ENCODE measurements at regions of chr7 and their contacts with region 1.

Region 1: DNA sequence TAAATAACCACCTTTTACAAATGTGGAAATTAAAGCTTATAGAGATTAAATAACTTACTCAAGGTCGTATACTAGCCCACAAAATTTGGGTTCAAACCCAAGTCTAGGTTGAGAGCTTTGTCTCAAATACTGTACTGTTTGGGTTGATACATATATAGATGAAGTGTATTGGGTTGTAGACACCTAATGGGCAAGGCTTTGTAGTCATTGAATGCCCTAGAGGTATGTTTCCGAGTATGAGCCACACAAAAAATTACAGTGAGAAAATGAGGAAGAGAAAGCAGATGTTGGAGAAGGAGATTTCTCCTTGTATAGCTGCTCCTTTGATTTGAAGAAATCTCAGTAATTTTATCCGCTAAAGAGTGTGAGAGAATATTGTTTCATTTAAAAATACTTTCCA is 60.6 kb downstream of the C1GALT1 start:
- DNase-seq: no peak
- ATAC-seq: no peak
- H3K4me3 ChIP-seq: no peak overlapping the region
- H3K4me3 Mint-ChIP-seq: no peak overlapping the region
- H3K27ac ChIP-seq: no peak overlapping the region
- H3K27ac Mint-ChIP-seq: peak overlapping the region in 2 of 9 donors; percentile 9 to 33
- H3K4me1 ChIP-seq: peaks cover 0 to 6% of the 10 kb centered on the region in 2 donors
- H3K4me1 Mint-ChIP-seq: peaks cover 8 to 79% (median 49%) of the 10 kb centered on the region in 7 donors
- H3K27me3 ChIP-seq: no peaks in the 10 kb centered on the region
- H3K27me3 Mint-ChIP-seq: no peaks in the 10 kb centered on the region

Region 2: GRCh38 chr7:7190142-7190541 is 52.8 kb before region 1 on chr7:
- CTCF ChIA-PET with region 1: no interaction called
- POLR2A ChIA-PET with region 1: no interaction called
- intact Hi-C with region 1: loop called in 1 of 2 experiments (anchors 2 kb)
- DNase-seq: no peak
- ATAC-seq: no peak
- H3K4me3 ChIP-seq: no peak overlapping the region
- H3K4me3 Mint-ChIP-seq: peak overlapping the region in 1 of 10 donors; percentile 7
- H3K27ac ChIP-seq: no peak overlapping the region
- H3K27ac Mint-ChIP-seq: peak overlapping the region in 2 of 9 donors; percentile 8 to 16
- H3K4me1 ChIP-seq: peaks cover 16 to 41% of the 10 kb centered on the region in 2 donors
- H3K4me1 Mint-ChIP-seq: peaks cover 25 to 54% (median 41%) of the 10 kb centered on the region in 7 donors
- H3K27me3 ChIP-seq: no peaks in the 10 kb centered on the region
- H3K27me3 Mint-ChIP-seq: no peaks in the 10 kb centered on the region

Region 3: GRCh38 chr7:7257899-7258692 is 15.2 kb after region 1 on chr7:
- CTCF ChIA-PET with region 1: interaction called, 5 read pairs
- POLR2A ChIA-PET with region 1: interaction called, 3 read pairs
- intact Hi-C with region 1: loop called in 1 of 2 experiments (anchors 2 kb)
- DNase-seq: no peak
- ATAC-seq: peak; percentile 60
- H3K4me3 ChIP-seq: no peak overlapping the region
- H3K4me3 Mint-ChIP-seq: peak overlapping the region; percentile 46 to 78 (median 71)
- H3K27ac ChIP-seq: peak overlapping the region; percentile 62
- H3K27ac Mint-ChIP-seq: peak overlapping the region; percentile 70 to 92 (median 86)
- H3K4me1 ChIP-seq: peaks cover 14 to 19% of the 10 kb centered on the region in 2 donors
- H3K4me1 Mint-ChIP-seq: peaks cover 10 to 64% (median 49%) of the 10 kb centered on the region in 7 donors
- H3K27me3 ChIP-seq: no peaks in the 10 kb centered on the region
- H3K27me3 Mint-ChIP-seq: no peaks in the 10 kb centered on the region

Region 4: GRCh38 chr7:8325063-8325462 is 1082.2 kb after region 1 on chr7:
- CTCF ChIA-PET with region 1: no interaction called
- POLR2A ChIA-PET with region 1: no interaction called
- intact Hi-C with region 1: no loop called
- DNase-seq: no peak
- ATAC-seq: no peak
- H3K4me3 ChIP-seq: no peak overlapping the region
- H3K4me3 Mint-ChIP-seq: no peak overlapping the region
- H3K27ac ChIP-seq: no peak overlapping the region
- H3K27ac Mint-ChIP-seq: no peak overlapping the region
- H3K4me1 ChIP-seq: no peaks in the 10 kb centered on the region
- H3K4me1 Mint-ChIP-seq: no peaks in the 10 kb centered on the region
- H3K27me3 ChIP-seq: no peaks in the 10 kb centered on the region
- H3K27me3 Mint-ChIP-seq: peaks cover 5 to 31% (median 29%) of the 10 kb centered on the region in 5 donors

Measured in naive thymus-derived CD4-positive, alpha-beta T cell (primary cell).